PC-3 (cell line): ENCODE measurements at regions of chr1 and their contacts with region 1.

Region 1: GRCh38 chr1:65525266-65526048 is 105.0 kb downstream of the LEPR start:
- DNase-seq: no peak
- ATAC-seq: no peak
- H3K4me3 ChIP-seq: no peak overlapping the region
- H3K27ac ChIP-seq: no peak overlapping the region
- H3K4me1 ChIP-seq: no peaks in the 10 kb centered on the region
- H3K27me3 ChIP-seq: peaks cover 82% of the 10 kb centered on the region
- CTCF ChIP-seq: no peak

Region 2: GRCh38 chr1:65449214-65449842 is 76.1 kb before region 1 on chr1:
- CTCF ChIA-PET with region 1: interaction called, 12 read pairs
- POLR2A ChIA-PET with region 1: no interaction called
- intact Hi-C with region 1: no loop called
- DNase-seq: peak; percentile 21
- ATAC-seq: peak; percentile 49; the same call in 1 of the 2 replicates
- H3K4me3 ChIP-seq: no peak overlapping the region
- H3K27ac ChIP-seq: no peak overlapping the region
- H3K4me1 ChIP-seq: no peaks in the 10 kb centered on the region
- H3K27me3 ChIP-seq: peaks cover 5% of the 10 kb centered on the region; the same call in 1 of the 2 replicates
- CTCF ChIP-seq: peak; percentile 47